Heart left ventricle (tissue), 16 donors: ENCODE measurements at regions of chr1 and their contacts with region 1.

Region 1: DNA sequence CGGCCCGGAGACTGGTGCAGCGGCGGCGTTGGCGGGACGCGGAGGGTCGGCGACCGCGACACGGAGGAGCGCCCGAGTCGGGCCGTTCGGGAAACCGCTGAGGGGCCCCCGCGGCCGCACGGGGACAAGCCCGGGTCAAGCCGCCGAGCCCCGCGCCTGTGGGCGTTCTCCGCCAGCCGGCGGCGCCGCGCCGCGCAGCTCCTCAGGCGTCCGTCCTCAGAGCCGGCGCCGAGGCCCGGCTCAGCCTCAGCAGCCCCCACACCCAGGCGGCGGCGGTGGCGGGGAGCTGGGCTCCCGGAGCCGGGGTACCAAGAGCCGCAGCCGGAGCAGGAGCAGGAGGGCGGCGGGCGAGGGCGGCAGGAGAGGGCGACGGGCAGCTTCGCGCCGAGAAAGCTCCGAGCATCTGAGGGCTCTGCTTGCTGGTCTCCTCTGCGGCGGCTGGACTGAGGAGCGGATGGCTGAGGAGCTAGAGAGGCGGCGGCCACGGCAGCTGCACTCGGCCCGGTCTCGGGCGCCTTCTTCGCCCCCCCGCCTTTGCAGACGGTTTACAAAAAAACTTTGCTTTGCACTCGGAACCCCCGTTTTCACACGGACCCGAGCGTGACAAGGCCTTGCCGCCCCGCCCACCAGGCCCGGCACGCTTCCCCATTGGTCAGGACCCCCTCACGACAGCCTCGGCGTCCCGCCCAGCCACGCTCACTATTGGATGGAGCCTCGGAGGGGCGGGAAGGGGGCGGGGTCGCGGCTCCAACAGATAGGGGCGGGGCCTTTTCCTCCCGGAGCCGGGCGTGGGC is at the start of gene SLC30A1:
- DNase-seq: peak; percentile 100
- ATAC-seq: peak; percentile 96 to 99 (median 98)
- H3K4me3 ChIP-seq: peak within 1 kb of the TSS; percentile 78 to 98 (median 90)
- H3K27ac ChIP-seq: peak within 1 kb of the TSS; percentile 92 to 99 (median 98)
- H3K4me1 ChIP-seq: peaks cover 0 to 66% (median 38%) of the 10 kb centered on the region in 12 donors
- H3K27me3 ChIP-seq: no peaks in the 10 kb centered on the region
- CTCF ChIP-seq: peak in 1 of 12 donors; percentile 25
- POLR2A ChIP-seq: peak; percentile 56 to 97
- total RNA-seq, gene SLC30A1: 8.6 to 29.2 (median 16.2) TPM

Region 2: GRCh38 chr1:211469938-211470529 is 108.8 kb before region 1 on chr1:
- intact Hi-C with region 1: loop called in 1 of 10 experiments (anchors 5 kb)
- DNase-seq: peak; percentile 72 to 87 (median 83)
- ATAC-seq: peak; percentile 79 to 96 (median 93)
- H3K4me3 ChIP-seq: no peak overlapping the region
- H3K27ac ChIP-seq: peak overlapping the region in 1 of 12 donors; percentile 4
- H3K4me1 ChIP-seq: peaks cover 0 to 20% (median 9%) of the 10 kb centered on the region in 12 donors
- H3K27me3 ChIP-seq: no peaks in the 10 kb centered on the region
- CTCF ChIP-seq: peak; percentile 78 to 91 (median 82)
- POLR2A ChIP-seq: no peak

Region 3: DNA sequence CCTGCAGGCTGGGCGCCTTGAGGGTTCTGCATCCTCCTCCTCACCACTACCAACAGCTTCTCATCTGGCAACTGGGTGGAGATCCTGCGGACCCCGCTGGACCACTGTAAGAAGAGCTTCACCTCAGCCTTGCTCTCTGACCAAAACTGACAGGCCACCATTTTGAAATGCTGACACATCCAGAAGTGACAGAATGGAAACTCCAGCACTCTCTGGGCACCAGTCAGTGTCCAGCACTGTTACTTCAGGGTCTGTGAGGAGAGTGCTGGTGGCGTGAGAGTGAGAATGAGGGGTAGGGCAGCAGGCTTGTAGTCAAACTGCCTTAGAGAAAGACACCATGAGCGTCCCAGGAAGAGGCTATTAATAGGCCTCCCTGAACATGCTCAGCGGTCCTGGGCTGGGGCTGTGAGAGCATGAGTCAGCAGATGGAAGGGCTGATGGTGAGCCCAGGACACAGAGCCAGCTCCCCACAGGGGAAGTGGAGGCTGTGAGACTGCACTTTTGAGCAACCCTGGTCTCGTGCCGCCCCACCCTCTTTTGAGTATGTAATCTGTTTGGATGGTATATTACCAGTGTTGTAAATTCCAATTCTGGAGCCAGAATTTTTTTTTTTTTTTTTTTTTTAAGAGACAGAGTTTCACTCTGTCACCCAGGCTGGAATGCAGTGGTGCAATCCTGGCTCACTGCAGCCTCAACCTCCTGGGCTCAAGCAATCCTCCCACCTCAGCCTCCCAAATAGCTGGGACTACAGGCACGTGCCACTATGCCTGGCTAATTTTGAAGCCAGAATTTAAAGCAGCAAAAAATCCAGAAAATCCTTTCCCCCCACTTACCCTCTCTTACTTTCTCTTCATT is 34.5 kb after region 1 on chr1:
- intact Hi-C with region 1: loop called in 3 of 10 experiments (anchors 2 to 5 kb)
- DNase-seq: peak; percentile 76 to 89 (median 86)
- ATAC-seq: peak; percentile 80 to 92 (median 91)
- H3K4me3 ChIP-seq: no peak overlapping the region
- H3K27ac ChIP-seq: peak overlapping the region; percentile 51 to 87 (median 74)
- H3K4me1 ChIP-seq: peaks cover 0 to 50% (median 24%) of the 10 kb centered on the region in 12 donors
- H3K27me3 ChIP-seq: no peaks in the 10 kb centered on the region
- CTCF ChIP-seq: no peak
- POLR2A ChIP-seq: no peak

Region 4: GRCh38 chr1:211648980-211649934 is 70.4 kb after region 1 on chr1:
- intact Hi-C with region 1: loop called in 7 of 10 experiments (anchors 2 to 5 kb)
- DNase-seq: peak in 2 of 5 donors; percentile 57
- ATAC-seq: peak; percentile 79 to 91 (median 85)
- H3K4me3 ChIP-seq: no peak overlapping the region
- H3K27ac ChIP-seq: no peak overlapping the region
- H3K4me1 ChIP-seq: peaks cover 0 to 10% (median 0%) of the 10 kb centered on the region in 12 donors
- H3K27me3 ChIP-seq: no peaks in the 10 kb centered on the region
- CTCF ChIP-seq: peak in 10 of 12 donors; percentile 23 to 73 (median 62)
- POLR2A ChIP-seq: no peak

Region 5: DNA sequence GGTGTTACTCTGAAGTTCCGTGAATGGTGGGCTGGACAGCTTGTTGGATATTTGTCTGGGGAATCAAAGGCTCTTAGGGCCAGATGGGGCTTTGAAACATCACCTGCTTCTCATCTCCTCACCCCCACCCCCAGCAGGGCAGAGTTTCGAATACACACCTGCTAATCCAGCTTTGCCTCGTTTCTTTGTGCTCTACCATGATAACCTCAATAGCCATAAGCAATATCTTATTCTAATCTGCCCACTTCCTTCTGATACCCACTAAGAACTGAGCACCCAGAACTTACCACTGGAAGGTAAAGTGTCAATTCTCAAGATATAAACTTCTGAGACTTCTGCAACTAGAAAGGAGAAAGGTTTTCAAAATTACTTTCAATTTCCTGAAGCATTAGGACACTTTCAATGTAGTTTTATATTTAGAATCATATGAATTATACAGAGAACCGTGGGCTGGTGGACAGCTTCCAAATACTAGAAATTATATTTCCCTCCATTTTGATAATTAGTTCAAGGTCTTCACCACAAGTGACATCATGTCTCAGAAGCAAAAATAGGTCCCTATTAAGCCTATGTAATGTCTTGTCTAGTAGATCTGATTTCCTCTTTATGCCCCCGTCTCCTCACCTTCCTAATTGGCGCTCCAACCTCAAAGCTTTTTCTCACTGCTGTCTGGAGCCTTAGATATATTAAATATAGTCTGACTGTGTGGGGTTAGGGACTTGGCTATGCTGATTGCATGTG is 161.0 kb after region 1 on chr1:
- intact Hi-C with region 1: loop called in 1 of 10 experiments (anchors 5 kb)
- DNase-seq: no peak
- ATAC-seq: no peak
- H3K4me3 ChIP-seq: no peak overlapping the region
- H3K27ac ChIP-seq: no peak overlapping the region
- H3K4me1 ChIP-seq: peaks cover 0 to 22% (median 0%) of the 10 kb centered on the region in 12 donors
- H3K27me3 ChIP-seq: peaks cover 0 to 4% (median 0%) of the 10 kb centered on the region in 9 donors
- CTCF ChIP-seq: no peak
- POLR2A ChIP-seq: no peak